Left lung (tissue), 14 donors: ENCODE measurements at regions of chr12 and their contacts with region 1.

Region 1: DNA sequence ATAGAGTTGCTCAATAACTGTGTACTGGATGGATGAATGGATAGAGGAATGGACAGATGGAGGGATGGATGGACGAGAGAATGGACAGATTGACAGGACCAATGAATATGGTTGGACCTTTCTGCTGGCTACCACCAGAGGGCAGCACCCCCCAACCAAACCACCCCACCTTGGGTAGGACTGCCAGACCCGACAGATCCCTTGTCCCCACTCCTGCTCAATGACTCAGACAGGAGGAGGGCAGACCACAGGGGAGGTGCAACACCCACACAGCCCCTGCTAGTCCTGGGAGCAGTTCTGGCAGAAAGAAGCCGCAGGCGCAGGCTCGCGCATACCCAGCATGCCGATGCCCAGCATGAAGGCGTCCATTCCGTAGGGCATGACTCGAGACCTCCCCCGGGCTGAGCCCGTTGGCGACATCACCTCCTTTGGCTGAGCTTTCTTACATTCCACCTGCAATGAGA is 12.4 kb downstream of the MSI1 start:
- DNase-seq: peak in 2 of 4 donors; percentile 70 to 79
- ATAC-seq: peak; percentile 97
- H3K4me3 ChIP-seq: no peak overlapping the region
- H3K27ac ChIP-seq: no peak overlapping the region
- H3K4me1 ChIP-seq: peaks cover 0 to 3% of the 10 kb centered on the region in 2 donors
- H3K27me3 ChIP-seq: peaks cover 0 to 34% of the 10 kb centered on the region in 2 donors
- CTCF ChIP-seq: peak; percentile 77 to 81

Region 2: DNA sequence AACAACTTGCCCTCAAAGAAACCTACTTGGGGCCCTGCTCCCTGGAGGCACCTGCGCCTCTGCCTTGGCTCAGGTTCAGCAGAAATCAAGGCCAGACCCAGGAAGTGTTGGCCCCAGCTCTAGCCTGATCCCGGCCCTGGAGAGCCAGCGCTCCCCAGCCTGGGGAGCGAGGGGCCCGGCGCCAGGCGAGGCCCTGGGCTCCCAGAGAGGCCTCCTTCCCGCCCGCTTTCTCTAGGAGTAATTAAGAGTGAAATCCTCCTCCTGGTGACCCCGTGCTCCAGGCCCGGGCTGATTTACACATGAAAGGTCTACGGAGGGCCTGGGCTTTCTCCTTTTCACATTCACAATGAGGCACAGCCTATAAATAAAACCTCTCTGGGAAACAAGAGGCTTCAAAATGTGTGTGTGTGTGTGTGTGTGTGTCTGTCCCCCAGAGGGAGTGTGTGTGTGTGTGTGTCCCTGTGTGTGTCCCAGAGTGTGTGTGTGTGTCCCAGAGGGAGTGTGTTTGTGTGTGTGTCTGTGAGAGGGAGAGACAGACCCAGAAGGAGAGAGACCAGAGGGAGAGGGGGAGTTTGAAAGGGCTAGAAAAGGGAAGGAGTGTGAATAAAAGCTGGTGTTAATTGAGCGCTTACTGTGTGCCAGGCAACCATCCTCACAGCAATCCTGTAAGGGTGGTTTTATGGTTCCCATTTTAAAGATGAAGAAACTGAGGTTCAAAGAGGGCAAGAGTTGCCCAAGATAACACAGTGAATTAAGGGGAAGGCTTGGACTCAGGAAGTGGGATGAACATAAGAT is 57.5 kb after region 1 on chr12:
- intact Hi-C with region 1: no loop called
- DNase-seq: peak in 1 of 4 donors; percentile 30
- ATAC-seq: peak; percentile 64
- H3K4me3 ChIP-seq: no peak overlapping the region
- H3K27ac ChIP-seq: no peak overlapping the region
- H3K4me1 ChIP-seq: no peaks in the 10 kb centered on the region
- H3K27me3 ChIP-seq: peaks cover 0 to 4% of the 10 kb centered on the region in 2 donors
- CTCF ChIP-seq: no peak

Region 3: GRCh38 chr12:120437754-120438494 is 81.3 kb after region 1 on chr12 and contains the start of gene COX6A1:
- intact Hi-C with region 1: loop called (anchors 5 to 10 kb)
- DNase-seq: peak; percentile 87 to 98 (median 96)
- ATAC-seq: peak; percentile 99
- H3K4me3 ChIP-seq: peak within 1 kb of the TSS; percentile 74 to 90
- H3K27ac ChIP-seq: peak within 1 kb of the TSS; percentile 69 to 85
- H3K4me1 ChIP-seq: peaks cover 11 to 24% of the 10 kb centered on the region in 2 donors
- H3K27me3 ChIP-seq: peaks cover 0 to 9% of the 10 kb centered on the region in 2 donors
- CTCF ChIP-seq: peak in 1 of 2 donors; percentile 23
- polyA plus RNA-seq, gene COX6A1: 187 to 217 (median 212) TPM